ENCODE measurements at regions of chr18 and their contacts with region 1.

Region 1: GRCh38 chr18:23032030-23032582 is 99.0 kb downstream of the RBBP8 start:
- DNase-seq: no peak
- H3K4me3 Mint-ChIP-seq: no peak overlapping the region
- H3K27ac Mint-ChIP-seq: no peak overlapping the region
- H3K4me1 Mint-ChIP-seq: peaks cover 10% of the 10 kb centered on the region
- H3K27me3 Mint-ChIP-seq: no peaks in the 10 kb centered on the region
- CTCF ChIP-seq: no peak

Region 2: DNA sequence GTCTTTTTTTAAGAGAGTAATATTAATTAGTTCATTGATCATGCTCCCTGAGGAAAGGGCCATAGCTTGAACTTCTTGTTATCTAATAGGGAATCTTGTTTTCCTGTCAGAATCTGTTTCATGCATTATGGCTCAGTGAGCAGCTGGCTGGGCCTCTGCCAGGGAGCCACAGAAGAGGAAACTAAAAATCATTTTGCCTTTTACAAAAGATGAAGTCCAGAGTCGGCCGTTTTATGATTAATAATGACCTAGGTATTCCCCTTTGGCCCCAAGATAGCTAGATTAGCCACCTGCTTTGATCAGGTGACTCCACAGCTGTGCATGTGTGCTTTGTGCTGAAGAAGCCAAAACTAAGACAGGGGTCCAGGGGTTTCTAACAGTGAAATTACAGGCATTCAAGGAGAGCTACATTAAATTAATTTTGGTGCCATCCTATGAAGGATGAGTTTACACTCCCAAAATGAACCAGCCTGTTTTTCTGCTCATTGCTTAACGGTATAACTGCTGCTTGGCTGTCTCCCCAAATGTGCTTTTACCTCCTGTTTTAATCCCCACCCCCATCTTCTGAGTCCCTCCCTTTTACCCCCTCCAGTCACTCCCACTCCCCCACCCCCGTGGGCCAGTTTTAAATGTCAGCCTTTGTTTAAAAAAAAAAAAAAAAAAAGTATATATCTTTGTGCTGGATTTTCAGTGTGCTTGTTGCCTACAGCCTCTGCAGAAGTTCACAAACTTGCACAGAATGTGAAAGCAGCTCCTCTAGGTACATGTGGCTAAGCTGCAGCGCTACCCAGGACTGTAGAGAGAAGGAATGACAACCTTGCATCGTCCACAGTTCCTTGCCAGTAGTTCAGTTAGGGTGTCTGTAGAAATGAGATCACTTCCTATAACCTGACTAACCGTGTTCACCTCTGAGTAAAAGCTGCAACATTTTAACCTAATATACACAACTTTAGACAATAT is 196.3 kb after region 1 on chr18:
- CTCF ChIA-PET with region 1: no interaction called
- intact Hi-C with region 1: loop called (anchors 10 kb)
- DNase-seq: no peak
- H3K4me3 Mint-ChIP-seq: peak overlapping the region; percentile 22
- H3K27ac Mint-ChIP-seq: peak overlapping the region; percentile 86
- H3K4me1 Mint-ChIP-seq: peaks cover 65% of the 10 kb centered on the region
- H3K27me3 Mint-ChIP-seq: no peaks in the 10 kb centered on the region
- CTCF ChIP-seq: no peak

Region 3: DNA sequence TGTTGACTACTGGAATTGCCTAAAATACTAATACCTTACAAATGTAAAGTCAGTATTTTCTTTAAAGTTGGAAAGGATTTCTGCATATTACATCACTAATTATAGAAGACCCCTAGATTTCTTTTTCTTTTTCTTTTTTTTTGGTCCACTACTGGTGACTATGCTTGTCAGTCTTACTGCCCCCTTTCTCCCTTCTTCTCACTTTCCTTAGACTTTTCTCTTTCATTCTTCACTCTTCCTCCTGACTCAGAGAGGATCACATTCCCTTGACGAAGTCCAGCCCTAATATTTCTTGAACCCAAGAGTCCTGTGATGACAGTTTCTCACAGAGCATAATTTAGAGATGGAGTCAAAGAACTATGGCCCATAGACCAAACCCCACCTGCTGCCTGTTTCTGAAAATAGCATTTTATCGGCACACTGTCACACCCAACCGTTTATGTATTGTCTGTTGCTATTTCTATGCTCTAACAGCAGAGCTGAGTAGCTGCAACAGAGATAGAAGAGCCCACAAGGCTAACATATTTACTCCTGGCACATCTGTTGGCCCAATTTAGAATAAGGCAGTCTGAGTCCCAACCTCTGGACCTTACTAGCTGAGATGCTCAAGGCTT is 380.4 kb after region 1 on chr18:
- CTCF ChIA-PET with region 1: interaction called, 15 read pairs
- intact Hi-C with region 1: loop called (anchors 5 kb)
- DNase-seq: no peak
- H3K4me3 Mint-ChIP-seq: no peak overlapping the region
- H3K27ac Mint-ChIP-seq: no peak overlapping the region
- H3K4me1 Mint-ChIP-seq: peaks cover 9% of the 10 kb centered on the region
- H3K27me3 Mint-ChIP-seq: no peaks in the 10 kb centered on the region
- CTCF ChIP-seq: no peak

Measured in Calu3 (cell line).